ENCODE measurements at regions of chr7 and their contacts with region 1.

Region 1: DNA sequence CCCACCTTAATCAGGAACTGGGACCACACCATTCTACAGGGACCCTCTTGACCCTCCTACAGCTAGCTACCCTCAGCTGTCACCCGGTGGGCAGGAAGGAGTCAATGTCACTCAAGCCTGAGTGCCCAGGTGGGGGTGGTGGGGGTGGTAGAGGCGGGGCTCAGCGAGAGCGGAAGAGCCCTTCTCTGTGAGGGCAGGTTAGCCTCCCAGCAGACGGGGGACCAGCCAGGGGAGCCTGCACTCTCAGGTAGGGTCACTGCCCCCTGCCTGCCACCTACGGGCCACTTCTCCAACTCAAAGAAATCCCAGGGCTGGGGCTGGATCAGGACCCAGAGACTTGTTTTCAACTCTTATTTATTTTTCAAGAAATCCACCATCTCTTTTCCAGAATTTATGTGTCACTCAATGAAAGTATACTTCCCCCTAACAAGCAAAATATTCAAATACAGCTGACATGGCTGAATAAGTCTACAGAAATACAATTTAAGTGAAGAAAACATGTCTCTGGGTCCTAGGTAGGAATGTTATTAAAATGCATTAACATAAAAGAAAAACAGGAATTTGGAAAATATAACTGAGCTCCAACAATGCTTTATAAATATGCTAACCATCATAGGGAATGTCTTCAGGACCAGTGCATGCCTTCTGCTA is 63.4 kb upstream of the DDC start:
- DNase-seq: no peak
- ATAC-seq: no peak
- H3K4me3 ChIP-seq: no peak overlapping the region
- H3K27ac ChIP-seq: peak overlapping the region; percentile 43
- H3K4me1 ChIP-seq: peaks cover 25% of the 10 kb centered on the region
- H3K27me3 ChIP-seq: no peaks in the 10 kb centered on the region

Region 2: DNA sequence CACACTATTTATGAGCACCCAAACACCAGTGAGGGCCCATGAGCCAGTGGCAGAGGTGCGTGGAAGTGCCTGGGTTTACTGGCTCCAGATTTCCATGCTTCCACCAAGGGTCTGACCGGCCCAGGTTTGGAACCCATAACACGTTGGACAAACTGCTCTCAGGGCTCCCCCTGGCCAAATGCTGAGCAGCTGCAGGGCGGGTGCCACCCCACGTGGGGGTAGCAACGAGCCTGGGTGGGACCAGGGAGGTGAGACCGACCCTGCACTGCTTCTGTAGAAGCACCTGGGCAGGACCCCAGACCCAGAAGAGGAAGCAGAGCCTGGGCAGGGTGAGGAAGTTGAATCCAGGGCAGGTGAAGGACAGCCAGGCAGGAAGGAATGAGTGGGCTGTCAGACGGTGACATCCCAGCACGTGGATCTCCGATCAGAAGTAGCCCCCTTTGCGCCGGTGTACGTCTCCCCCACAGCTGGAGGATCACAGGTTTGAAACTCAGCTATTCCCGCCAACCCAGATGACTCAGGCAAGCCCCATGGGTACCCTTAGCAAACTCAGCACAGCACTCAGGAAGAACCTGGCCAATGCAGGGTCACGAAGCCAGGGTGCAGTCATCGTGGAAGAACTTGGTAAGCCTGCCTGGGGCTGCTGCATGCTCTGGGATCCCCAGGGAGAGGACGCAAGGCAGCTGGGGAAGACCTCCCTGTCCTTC is 37.0 kb after region 1 on chr7:
- intact Hi-C with region 1: loop called in 2 of 4 experiments (anchors 5 kb)
- DNase-seq: no peak
- ATAC-seq: no peak
- H3K4me3 ChIP-seq: no peak overlapping the region
- H3K27ac ChIP-seq: peak overlapping the region; percentile 25
- H3K4me1 ChIP-seq: peaks cover 43% of the 10 kb centered on the region
- H3K27me3 ChIP-seq: no peaks in the 10 kb centered on the region